ENCODE measurements at regions of chr12 and their contacts with region 1.

Region 1: GRCh38 chr12:8662593-8662992 is at the start of gene MFAP5:
- DNase-seq: no peak
- ATAC-seq: no peak
- H3K4me3 ChIP-seq: no peak within 1 kb of the TSS
- H3K4me3 Mint-ChIP-seq: no peak within 1 kb of the TSS
- H3K27ac ChIP-seq: no peak within 1 kb of the TSS
- H3K27ac Mint-ChIP-seq: no peak within 1 kb of the TSS
- H3K4me1 ChIP-seq: no peaks in the 10 kb centered on the region
- H3K4me1 Mint-ChIP-seq: no peaks in the 10 kb centered on the region
- H3K27me3 ChIP-seq: no peaks in the 10 kb centered on the region
- H3K27me3 Mint-ChIP-seq: peaks cover 7% of the 10 kb centered on the region
- CTCF ChIP-seq: no peak
- total RNA-seq, gene MFAP5: not detected

Region 2: GRCh38 chr12:8629486-8630033 is 33.0 kb before region 1 on chr12:
- CTCF ChIA-PET with region 1: no interaction called
- POLR2A ChIA-PET with region 1: no interaction called
- intact Hi-C with region 1: no loop called
- DNase-seq: peak in 1 of 9 experiments; percentile 7
- ATAC-seq: no peak
- H3K4me3 ChIP-seq: no peak overlapping the region
- H3K4me3 Mint-ChIP-seq: no peak overlapping the region
- H3K27ac ChIP-seq: no peak overlapping the region
- H3K27ac Mint-ChIP-seq: no peak overlapping the region
- H3K4me1 ChIP-seq: no peaks in the 10 kb centered on the region
- H3K4me1 Mint-ChIP-seq: no peaks in the 10 kb centered on the region
- H3K27me3 ChIP-seq: no peaks in the 10 kb centered on the region
- H3K27me3 Mint-ChIP-seq: no peaks in the 10 kb centered on the region
- CTCF ChIP-seq: no peak

Region 3: GRCh38 chr12:8648576-8649205 is 13.9 kb before region 1 on chr12:
- CTCF ChIA-PET with region 1: interaction called, 12 read pairs
- POLR2A ChIA-PET with region 1: interaction called, 4 read pairs
- intact Hi-C with region 1: no loop called
- DNase-seq: peak in 8 of 9 experiments; percentile 2 to 59 (median 31)
- ATAC-seq: peak; percentile 24
- H3K4me3 ChIP-seq: no peak overlapping the region
- H3K4me3 Mint-ChIP-seq: no peak overlapping the region
- H3K27ac ChIP-seq: no peak overlapping the region
- H3K27ac Mint-ChIP-seq: no peak overlapping the region
- H3K4me1 ChIP-seq: peaks cover 20% of the 10 kb centered on the region
- H3K4me1 Mint-ChIP-seq: peaks cover 43% of the 10 kb centered on the region
- H3K27me3 ChIP-seq: peaks cover 0 to under 1% of the 10 kb centered on the region in 2 experiments
- H3K27me3 Mint-ChIP-seq: no peaks in the 10 kb centered on the region
- CTCF ChIP-seq: no peak

Region 4: GRCh38 chr12:9925708-9926393 is 1263.3 kb after region 1 on chr12:
- CTCF ChIA-PET with region 1: no interaction called
- POLR2A ChIA-PET with region 1: no interaction called
- intact Hi-C with region 1: no loop called
- DNase-seq: peak in 6 of 9 experiments; percentile 5 to 74 (median 44)
- ATAC-seq: peak; percentile 59
- H3K4me3 ChIP-seq: peak overlapping the region; percentile 21 to 28
- H3K4me3 Mint-ChIP-seq: peak overlapping the region; percentile 77
- H3K27ac ChIP-seq: no peak overlapping the region
- H3K27ac Mint-ChIP-seq: peak overlapping the region; percentile 18
- H3K4me1 ChIP-seq: no peaks in the 10 kb centered on the region
- H3K4me1 Mint-ChIP-seq: peaks cover 12% of the 10 kb centered on the region
- H3K27me3 ChIP-seq: peaks cover 0 to 2% of the 10 kb centered on the region in 2 experiments
- H3K27me3 Mint-ChIP-seq: no peaks in the 10 kb centered on the region
- CTCF ChIP-seq: peak; percentile 62

Measured in CD8-positive, alpha-beta T cell (primary cell).